T-cell (primary cell): ENCODE measurements at regions of chr1 and their contacts with region 1.

Region 1: GRCh38 chr1:34529935-34530859 is 224.7 kb upstream of the GJB5 start:
- DNase-seq: no peak
- ATAC-seq: no peak
- H3K4me3 ChIP-seq: no peak overlapping the region
- H3K4me3 Mint-ChIP-seq: no peak overlapping the region
- H3K27ac ChIP-seq: no peak overlapping the region
- H3K27ac Mint-ChIP-seq: no peak overlapping the region
- H3K4me1 ChIP-seq: no peaks in the 10 kb centered on the region
- H3K4me1 Mint-ChIP-seq: no peaks in the 10 kb centered on the region
- H3K27me3 ChIP-seq: peaks cover 0 to 22% of the 10 kb centered on the region in 2 experiments
- H3K27me3 Mint-ChIP-seq: peaks cover 31 to 36% of the 10 kb centered on the region in 2 donors

Region 2: DNA sequence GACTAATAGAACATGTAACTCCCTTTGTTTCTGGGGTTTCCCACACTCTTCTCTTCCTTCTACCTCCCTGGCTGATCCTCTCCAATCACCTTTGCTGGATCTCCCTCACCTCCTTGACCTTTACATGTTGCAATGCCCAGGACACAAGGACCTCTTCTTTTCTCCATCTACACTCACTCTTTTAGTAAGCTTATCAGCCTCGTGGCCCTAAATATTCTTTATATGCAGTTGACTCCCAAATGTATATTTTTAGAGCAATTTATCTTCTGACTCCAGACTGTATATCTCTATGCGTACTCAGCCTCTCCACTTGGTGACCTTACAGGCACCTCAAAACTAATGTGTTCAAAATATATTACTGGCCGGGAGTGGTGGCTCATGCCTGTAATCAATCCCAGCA is 1257.9 kb after region 1 on chr1:
- CTCF ChIA-PET with region 1: interaction called in 1 of 2 experiments, 11 read pairs
- POLR2A ChIA-PET with region 1: no interaction called
- DNase-seq: no peak
- ATAC-seq: no peak
- H3K4me3 ChIP-seq: no peak overlapping the region
- H3K4me3 Mint-ChIP-seq: no peak overlapping the region
- H3K27ac ChIP-seq: no peak overlapping the region
- H3K27ac Mint-ChIP-seq: no peak overlapping the region
- H3K4me1 ChIP-seq: no peaks in the 10 kb centered on the region
- H3K4me1 Mint-ChIP-seq: no peaks in the 10 kb centered on the region
- H3K27me3 ChIP-seq: no peaks in the 10 kb centered on the region
- H3K27me3 Mint-ChIP-seq: no peaks in the 10 kb centered on the region